ENCODE measurements at regions of chr12 and their contacts with region 1.

Region 1: GRCh38 chr12:118645219-118645618 is 268.9 kb downstream of the SUDS3 start:
- DNase-seq: peak in 1 of 35 experiments; percentile 4
- ATAC-seq: no peak
- H3K4me3 ChIP-seq: no peak overlapping the region
- H3K4me3 Mint-ChIP-seq: no peak overlapping the region
- H3K27ac ChIP-seq: no peak overlapping the region
- H3K27ac Mint-ChIP-seq: no peak overlapping the region
- H3K4me1 ChIP-seq: no peaks in the 10 kb centered on the region
- H3K4me1 Mint-ChIP-seq: no peaks in the 10 kb centered on the region
- H3K27me3 ChIP-seq: no peaks in the 10 kb centered on the region
- H3K27me3 Mint-ChIP-seq: no peaks in the 10 kb centered on the region

Region 2: GRCh38 chr12:118680356-118680963 is 35.2 kb after region 1 on chr12:
- CTCF ChIA-PET with region 1: no interaction called
- POLR2A ChIA-PET with region 1: no interaction called
- DNase-seq: no peak
- ATAC-seq: no peak
- H3K4me3 ChIP-seq: no peak overlapping the region
- H3K4me3 Mint-ChIP-seq: no peak overlapping the region
- H3K27ac ChIP-seq: no peak overlapping the region
- H3K27ac Mint-ChIP-seq: no peak overlapping the region
- H3K4me1 ChIP-seq: no peaks in the 10 kb centered on the region
- H3K4me1 Mint-ChIP-seq: no peaks in the 10 kb centered on the region
- H3K27me3 ChIP-seq: no peaks in the 10 kb centered on the region
- H3K27me3 Mint-ChIP-seq: peaks cover 8 to 11% of the 10 kb centered on the region in 2 donors

Region 3: GRCh38 chr12:118773956-118774723 is 128.9 kb after region 1 on chr12:
- CTCF ChIA-PET with region 1: no interaction called
- POLR2A ChIA-PET with region 1: interaction called in 1 of 2 experiments, 10 read pairs
- DNase-seq: no peak
- ATAC-seq: no peak
- H3K4me3 ChIP-seq: no peak overlapping the region
- H3K4me3 Mint-ChIP-seq: no peak overlapping the region
- H3K27ac ChIP-seq: no peak overlapping the region
- H3K27ac Mint-ChIP-seq: no peak overlapping the region
- H3K4me1 ChIP-seq: no peaks in the 10 kb centered on the region
- H3K4me1 Mint-ChIP-seq: no peaks in the 10 kb centered on the region
- H3K27me3 ChIP-seq: peaks cover 5 to 19% of the 10 kb centered on the region in 2 experiments
- H3K27me3 Mint-ChIP-seq: peaks cover 17 to 31% of the 10 kb centered on the region in 2 donors